Right cardiac atrium (tissue), 5 donors: ENCODE measurements at regions of chr13 and their contacts with region 1.

Region 1: GRCh38 chr13:30865123-30866049 is 40.7 kb upstream of the MEDAG start:
- DNase-seq: peak; percentile 83 to 93 (median 87)
- ATAC-seq: peak; percentile 76 to 85
- H3K4me3 ChIP-seq: no peak overlapping the region
- H3K27ac ChIP-seq: peak overlapping the region; percentile 30
- H3K4me1 ChIP-seq: peaks cover 5% of the 10 kb centered on the region
- H3K27me3 ChIP-seq: no peaks in the 10 kb centered on the region

Region 2: GRCh38 chr13:29452773-29453616 is 1412.4 kb before region 1 on chr13:
- intact Hi-C with region 1: no loop called
- DNase-seq: no peak
- ATAC-seq: no peak
- H3K4me3 ChIP-seq: no peak overlapping the region
- H3K27ac ChIP-seq: no peak overlapping the region
- H3K4me1 ChIP-seq: no peaks in the 10 kb centered on the region
- H3K27me3 ChIP-seq: no peaks in the 10 kb centered on the region

Region 3: GRCh38 chr13:30673669-30674521 is 191.5 kb before region 1 on chr13:
- intact Hi-C with region 1: loop called in 1 of 4 experiments (anchors 10 kb)
- DNase-seq: peak; percentile 90 to 96 (median 95)
- ATAC-seq: peak; percentile 97
- H3K4me3 ChIP-seq: peak overlapping the region; percentile 47
- H3K27ac ChIP-seq: peak overlapping the region; percentile 57
- H3K4me1 ChIP-seq: peaks cover 2% of the 10 kb centered on the region
- H3K27me3 ChIP-seq: no peaks in the 10 kb centered on the region

Region 4: GRCh38 chr13:30915691-30916541 is 50.5 kb after region 1 on chr13:
- intact Hi-C with region 1: no loop called
- DNase-seq: peak in 1 of 3 donors; percentile 48
- ATAC-seq: peak in 1 of 2 donors; percentile 36
- H3K4me3 ChIP-seq: no peak overlapping the region
- H3K27ac ChIP-seq: no peak overlapping the region
- H3K4me1 ChIP-seq: peaks cover 3% of the 10 kb centered on the region
- H3K27me3 ChIP-seq: no peaks in the 10 kb centered on the region